ENCODE measurements at regions of chr11 and their contacts with region 1.

Region 1: GRCh38 chr11:119356349-119357031 is 10.0 kb upstream of the MFRP start:
- DNase-seq: peak; percentile 79 to 90 (median 86)
- ATAC-seq: peak; percentile 95
- H3K4me3 ChIP-seq: peak overlapping the region; percentile 40
- H3K27ac ChIP-seq: peak overlapping the region; percentile 77
- H3K4me1 ChIP-seq: peaks cover 12 to 18% of the 10 kb centered on the region in 2 experiments; a peak in 4 of 5 replicates
- H3K27me3 ChIP-seq: no peaks in the 10 kb centered on the region
- CTCF ChIP-seq: peak; percentile 88 to 97 (median 92)
- EP300 ChIP-seq: peak; percentile 29; the same call in 1 of the 2 replicates
- POLR2A ChIP-seq: no peak
- RAD21 ChIP-seq: peak; percentile 89 to 90

Region 2: GRCh38 chr11:119373921-119374631 is 17.6 kb after region 1 on chr11:
- CTCF ChIA-PET with region 1: interaction called, 41 read pairs
- POLR2A ChIA-PET with region 1: interaction called, 24 read pairs
- in situ Hi-C with region 1: no loop called
- intact Hi-C with region 1: loop called (anchors 1 kb)
- DNase-seq: peak; percentile 58 to 77 (median 65)
- ATAC-seq: peak; percentile 54
- H3K4me3 ChIP-seq: no peak overlapping the region
- H3K27ac ChIP-seq: no peak overlapping the region; the same call in 2 of the 3 replicates
- H3K4me1 ChIP-seq: peaks cover 66 to 77% of the 10 kb centered on the region in 2 experiments
- H3K27me3 ChIP-seq: no peaks in the 10 kb centered on the region
- CTCF ChIP-seq: peak; percentile 88 to 94 (median 92)
- EP300 ChIP-seq: peak; percentile 12; the same call in 1 of the 2 replicates
- POLR2A ChIP-seq: no peak
- RAD21 ChIP-seq: peak; percentile 72 to 93

Region 3: GRCh38 chr11:119381181-119381988 is 24.9 kb after region 1 on chr11 and contains the start of gene USP2:
- CTCF ChIA-PET with region 1: interaction called, 27 read pairs
- POLR2A ChIA-PET with region 1: interaction called, 24 read pairs
- in situ Hi-C with region 1: no loop called
- intact Hi-C with region 1: loop called (anchors 1 kb)
- DNase-seq: peak; percentile 95 to 97 (median 96)
- ATAC-seq: peak; percentile 88
- H3K4me3 ChIP-seq: peak within 1 kb of the TSS; percentile 61
- H3K27ac ChIP-seq: peak within 1 kb of the TSS; percentile 67
- H3K4me1 ChIP-seq: peaks cover 43 to 47% of the 10 kb centered on the region in 2 experiments
- H3K27me3 ChIP-seq: no peaks in the 10 kb centered on the region
- CTCF ChIP-seq: peak; percentile 93 to 96 (median 94)
- EP300 ChIP-seq: peak; percentile 24; the same call in 1 of the 2 replicates
- POLR2A ChIP-seq: 0 out of 2 replicates have a peak, but pooled peaks have one; percentile 40
- RAD21 ChIP-seq: peak; percentile 87 to 89
- polyA plus RNA-seq, gene USP2: 3.4 to 5.8 TPM

Region 4: GRCh38 chr11:120210626-120211521 is 854.4 kb after region 1 on chr11 and contains the start of gene OAF:
- CTCF ChIA-PET with region 1: no interaction called
- POLR2A ChIA-PET with region 1: no interaction called
- in situ Hi-C with region 1: no loop called
- intact Hi-C with region 1: loop called (anchors 10 kb)
- DNase-seq: peak; percentile 74 to 88 (median 84)
- ATAC-seq: peak; percentile 84
- H3K4me3 ChIP-seq: peak within 1 kb of the TSS; percentile 58
- H3K27ac ChIP-seq: peak within 1 kb of the TSS; percentile 70
- H3K4me1 ChIP-seq: peaks cover 15 to 25% of the 10 kb centered on the region in 2 experiments; a peak in 4 of 5 replicates
- H3K27me3 ChIP-seq: peaks cover 0 to 11% of the 10 kb centered on the region in 2 experiments; a peak in 2 of 5 replicates
- CTCF ChIP-seq: peak in 2 of 3 experiments; percentile 17 to 63; a peak in 1 of 6 replicates
- EP300 ChIP-seq: no peak
- POLR2A ChIP-seq: no peak
- RAD21 ChIP-seq: no peak
- polyA plus RNA-seq, gene OAF: 1.1 to 1.4 TPM

Measured in K562 (cell line).